B cell (primary cell): ENCODE measurements at regions of chr17 and their contacts with region 1.

Region 1: GRCh38 chr17:76397687-76398487 is 13.5 kb downstream of the SPHK1 start:
- DNase-seq: peak; percentile 85
- ATAC-seq: peak; percentile 95
- H3K4me3 ChIP-seq: no peak overlapping the region
- H3K4me3 Mint-ChIP-seq: no peak overlapping the region
- H3K27ac ChIP-seq: no peak overlapping the region
- H3K27ac Mint-ChIP-seq: no peak overlapping the region
- H3K4me1 ChIP-seq: no peaks in the 10 kb centered on the region
- H3K4me1 Mint-ChIP-seq: no peaks in the 10 kb centered on the region
- H3K27me3 ChIP-seq: no peaks in the 10 kb centered on the region
- H3K27me3 Mint-ChIP-seq: no peaks in the 10 kb centered on the region
- CTCF ChIP-seq: peak; percentile 97

Region 2: GRCh38 chr17:76147211-76148014 is 250.5 kb before region 1 on chr17:
- CTCF ChIA-PET with region 1: no interaction called
- POLR2A ChIA-PET with region 1: no interaction called
- intact Hi-C with region 1: no loop called
- DNase-seq: no peak
- ATAC-seq: no peak
- H3K4me3 ChIP-seq: no peak overlapping the region
- H3K4me3 Mint-ChIP-seq: no peak overlapping the region
- H3K27ac ChIP-seq: no peak overlapping the region
- H3K27ac Mint-ChIP-seq: peak overlapping the region; percentile 7
- H3K4me1 ChIP-seq: peaks cover 38 to 47% of the 10 kb centered on the region in 2 donors
- H3K4me1 Mint-ChIP-seq: peaks cover 49% of the 10 kb centered on the region
- H3K27me3 ChIP-seq: no peaks in the 10 kb centered on the region
- H3K27me3 Mint-ChIP-seq: no peaks in the 10 kb centered on the region
- CTCF ChIP-seq: peak; percentile 17

Region 3: DNA sequence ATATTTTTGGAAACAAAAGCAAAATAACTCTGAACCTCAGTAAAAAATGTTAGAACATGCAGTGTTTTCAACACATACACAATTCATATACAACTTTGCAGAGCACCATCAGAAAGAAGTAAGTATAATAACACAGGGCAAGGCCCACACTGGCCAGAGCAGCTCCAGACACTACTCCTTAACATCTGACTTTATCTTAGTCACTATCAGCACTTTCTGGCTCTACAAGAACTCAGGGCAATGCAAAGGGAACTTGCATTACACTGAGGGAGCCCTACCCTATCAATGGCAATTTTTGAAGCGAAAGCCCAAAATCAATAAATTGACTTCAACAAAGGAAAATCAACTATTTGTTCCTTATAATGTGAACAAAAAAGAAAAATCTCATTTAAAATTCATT is 174.1 kb before region 1 on chr17:
- CTCF ChIA-PET with region 1: no interaction called
- POLR2A ChIA-PET with region 1: no interaction called
- intact Hi-C with region 1: no loop called
- DNase-seq: no peak
- ATAC-seq: no peak
- H3K4me3 ChIP-seq: no peak overlapping the region
- H3K4me3 Mint-ChIP-seq: no peak overlapping the region
- H3K27ac ChIP-seq: no peak overlapping the region
- H3K27ac Mint-ChIP-seq: no peak overlapping the region
- H3K4me1 ChIP-seq: no peaks in the 10 kb centered on the region
- H3K4me1 Mint-ChIP-seq: no peaks in the 10 kb centered on the region
- H3K27me3 ChIP-seq: no peaks in the 10 kb centered on the region
- H3K27me3 Mint-ChIP-seq: peaks cover under 1% of the 10 kb centered on the region
- CTCF ChIP-seq: no peak

Region 4: DNA sequence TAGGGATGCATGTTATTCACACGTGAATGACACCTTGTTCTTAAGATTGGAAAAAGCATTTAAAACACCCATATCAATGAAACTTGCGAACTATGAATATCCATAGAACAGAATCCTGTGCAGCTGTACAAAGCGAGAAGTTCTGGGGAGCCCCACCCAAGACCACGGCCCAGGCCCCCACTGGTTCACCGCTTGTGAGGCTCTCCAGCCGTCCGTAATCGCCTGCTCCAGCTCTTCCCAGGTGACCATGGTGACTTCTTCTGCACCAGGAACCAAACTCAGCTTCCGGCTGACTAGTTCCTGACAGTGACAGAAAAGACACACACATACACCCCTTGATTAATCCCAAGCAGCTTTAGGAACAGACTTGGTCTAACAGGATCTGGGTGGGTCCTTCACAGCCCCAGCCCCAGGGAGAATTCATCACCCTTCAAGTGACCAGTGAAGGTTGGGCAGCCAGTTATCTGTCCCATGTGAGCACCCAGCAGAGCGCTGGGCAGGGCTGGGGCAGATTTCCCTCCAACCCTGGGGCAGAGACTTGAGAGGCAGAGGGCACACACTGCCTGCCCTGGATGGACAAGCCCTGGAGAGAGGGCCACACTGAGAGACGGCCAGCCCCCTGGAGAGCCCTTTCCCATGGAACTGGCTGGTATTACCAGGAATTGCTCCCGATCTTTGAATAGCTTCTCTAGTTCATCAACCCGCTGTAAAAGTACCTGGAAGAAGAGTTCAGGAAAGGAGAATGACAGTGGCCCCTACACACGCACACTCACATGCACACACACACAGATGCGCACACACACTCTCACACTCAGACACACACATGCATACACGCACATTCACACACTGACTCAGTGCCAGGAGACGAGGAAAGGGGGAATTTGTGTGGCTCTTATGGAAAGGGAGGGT is 93.4 kb before region 1 on chr17:
- CTCF ChIA-PET with region 1: interaction called, 119 read pairs
- POLR2A ChIA-PET with region 1: no interaction called
- intact Hi-C with region 1: no loop called
- DNase-seq: no peak
- ATAC-seq: no peak
- H3K4me3 ChIP-seq: no peak overlapping the region
- H3K4me3 Mint-ChIP-seq: no peak overlapping the region
- H3K27ac ChIP-seq: no peak overlapping the region
- H3K27ac Mint-ChIP-seq: no peak overlapping the region
- H3K4me1 ChIP-seq: no peaks in the 10 kb centered on the region
- H3K4me1 Mint-ChIP-seq: peaks cover 3% of the 10 kb centered on the region
- H3K27me3 ChIP-seq: no peaks in the 10 kb centered on the region
- H3K27me3 Mint-ChIP-seq: peaks cover 3% of the 10 kb centered on the region
- CTCF ChIP-seq: no peak

Region 5: DNA sequence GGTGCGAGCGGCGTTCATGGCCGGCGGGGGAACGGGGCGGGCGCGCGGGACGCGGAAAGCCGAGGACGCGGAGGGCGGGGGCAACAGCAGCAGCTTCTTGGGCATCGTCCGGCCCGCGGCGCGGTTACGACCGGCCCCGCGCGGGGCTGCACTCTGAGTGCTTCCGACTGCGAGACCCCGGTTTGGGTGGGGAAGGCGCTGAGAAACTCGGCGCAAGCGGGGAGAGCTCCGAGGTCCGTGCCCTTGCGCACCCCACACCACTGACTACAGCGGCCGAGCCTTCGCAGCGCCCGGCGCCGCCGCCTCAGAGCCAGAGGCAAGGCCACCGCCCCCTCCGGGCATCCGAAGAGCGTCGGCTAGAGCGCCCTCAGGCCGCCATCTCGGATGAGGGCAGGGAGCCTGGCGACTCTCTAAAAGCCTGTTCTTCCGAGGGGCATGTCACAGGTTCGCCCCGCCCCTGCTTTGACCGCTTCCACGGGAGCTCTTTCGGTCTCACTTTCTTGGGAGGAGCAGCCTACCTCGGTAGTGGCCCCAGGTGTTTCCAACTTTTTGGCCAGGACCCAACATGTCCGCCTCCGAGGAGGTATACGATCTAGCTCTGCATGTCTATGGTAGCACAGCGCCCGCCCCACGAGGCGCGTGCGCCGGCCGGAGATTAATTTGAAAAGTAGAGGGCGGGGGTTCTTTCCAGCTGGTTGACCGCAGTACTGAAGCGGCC is 44.1 kb before region 1 on chr17 and contains the start of gene PRPSAP1:
- CTCF ChIA-PET with region 1: interaction called, 15 read pairs
- POLR2A ChIA-PET with region 1: interaction called, 6 read pairs
- intact Hi-C with region 1: no loop called
- DNase-seq: peak; percentile 96
- ATAC-seq: peak; percentile 93
- H3K4me3 ChIP-seq: peak within 1 kb of the TSS; percentile 53 to 88 (median 68)
- H3K4me3 Mint-ChIP-seq: peak within 1 kb of the TSS; percentile 99
- H3K27ac ChIP-seq: peak within 1 kb of the TSS; percentile 84 to 94
- H3K27ac Mint-ChIP-seq: peak within 1 kb of the TSS; percentile 99
- H3K4me1 ChIP-seq: peaks cover 7 to 16% of the 10 kb centered on the region in 2 donors
- H3K4me1 Mint-ChIP-seq: peaks cover 27% of the 10 kb centered on the region
- H3K27me3 ChIP-seq: no peaks in the 10 kb centered on the region
- H3K27me3 Mint-ChIP-seq: no peaks in the 10 kb centered on the region
- CTCF ChIP-seq: peak; percentile 19
- total RNA-seq, gene PRPSAP1: 45.5 and 48.0 TPM in 2 replicates

Region 6: DNA sequence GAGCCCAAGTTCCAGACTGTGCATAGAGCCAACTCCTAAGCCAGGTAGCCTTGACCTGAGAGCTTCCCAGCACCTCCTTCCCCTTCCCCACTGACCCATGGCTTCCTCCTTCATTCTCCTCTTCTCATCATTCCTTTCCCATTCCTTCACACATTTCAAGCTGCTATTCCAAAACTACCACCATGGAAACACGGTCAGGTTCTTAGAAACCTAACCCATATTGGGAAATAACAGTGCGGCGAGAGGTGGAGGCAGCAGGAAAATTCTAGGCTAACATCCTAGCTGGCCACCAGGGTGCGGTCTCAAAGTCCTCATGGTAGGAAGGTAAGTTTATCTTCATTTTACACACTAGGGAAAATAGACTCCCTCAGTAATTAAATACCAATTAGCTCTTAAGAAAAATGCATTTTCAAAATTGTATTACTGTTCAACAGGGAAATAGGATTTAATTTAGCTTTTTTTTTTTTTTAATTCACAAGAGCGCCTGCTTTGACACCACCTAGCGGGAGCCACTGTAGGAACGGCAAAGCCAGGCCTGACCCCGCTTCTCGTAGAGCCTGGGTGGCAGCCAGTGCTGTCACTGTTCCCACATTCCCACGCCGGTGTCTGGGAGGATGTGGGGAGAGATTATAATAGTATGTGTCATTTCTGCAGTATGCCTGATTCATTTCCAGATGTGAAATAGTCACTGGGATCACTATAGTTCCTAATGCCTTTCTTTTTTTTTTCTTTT is 27.5 kb before region 1 on chr17:
- CTCF ChIA-PET with region 1: interaction called, 20 read pairs
- POLR2A ChIA-PET with region 1: no interaction called
- intact Hi-C with region 1: no loop called
- DNase-seq: no peak
- ATAC-seq: no peak
- H3K4me3 ChIP-seq: no peak overlapping the region
- H3K4me3 Mint-ChIP-seq: no peak overlapping the region
- H3K27ac ChIP-seq: no peak overlapping the region
- H3K27ac Mint-ChIP-seq: no peak overlapping the region
- H3K4me1 ChIP-seq: no peaks in the 10 kb centered on the region
- H3K4me1 Mint-ChIP-seq: no peaks in the 10 kb centered on the region
- H3K27me3 ChIP-seq: peaks cover 0 to 2% (median 0%) of the 10 kb centered on the region in 4 experiments
- H3K27me3 Mint-ChIP-seq: peaks cover 12% of the 10 kb centered on the region
- CTCF ChIP-seq: no peak

Region 7: DNA sequence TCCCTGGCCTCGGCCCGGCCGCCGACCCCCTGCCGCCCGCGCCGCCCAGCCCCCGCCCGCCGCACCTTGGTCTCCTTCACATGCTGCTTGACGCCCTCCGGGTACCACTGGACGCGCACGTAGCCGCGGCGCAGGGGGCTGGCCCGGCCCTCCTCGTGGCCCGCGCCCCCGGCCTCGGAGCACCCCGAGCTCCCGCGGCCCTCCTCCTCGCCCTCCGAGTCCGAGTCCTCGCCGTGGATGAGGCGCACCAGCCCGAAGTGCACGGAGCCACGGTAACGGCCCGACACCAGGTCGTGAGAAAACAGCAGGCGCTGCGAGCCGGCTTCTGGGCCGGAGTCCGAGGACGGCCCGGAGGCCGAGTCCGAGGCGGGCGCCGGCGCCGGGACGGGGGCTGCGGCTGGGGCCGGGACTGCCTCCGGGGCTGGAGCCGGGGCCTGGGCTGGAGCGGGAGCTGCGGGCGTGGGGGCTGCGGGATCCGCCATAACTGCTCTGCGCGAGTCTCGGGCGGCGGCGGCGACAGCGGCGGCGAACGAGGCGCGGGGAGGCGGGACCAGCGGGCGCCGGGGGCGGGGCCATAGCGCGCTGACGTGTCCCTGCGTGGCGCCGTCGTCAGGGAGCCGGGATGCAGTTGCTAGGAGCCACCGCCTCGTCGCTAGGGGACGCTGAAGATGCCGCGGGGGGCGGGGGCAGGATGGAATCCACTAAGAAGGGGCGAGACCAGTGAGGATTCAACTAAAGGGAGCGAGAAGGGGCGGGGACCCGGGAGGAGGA is 55.0 kb after region 1 on chr17 and contains the start of gene UBE2O:
- CTCF ChIA-PET with region 1: interaction called, 265 read pairs
- POLR2A ChIA-PET with region 1: no interaction called
- intact Hi-C with region 1: no loop called
- DNase-seq: peak; percentile 95
- ATAC-seq: peak; percentile 93
- H3K4me3 ChIP-seq: peak within 1 kb of the TSS; percentile 46 to 91 (median 72)
- H3K4me3 Mint-ChIP-seq: peak within 1 kb of the TSS; percentile 88
- H3K27ac ChIP-seq: peak within 1 kb of the TSS; percentile 46 to 77
- H3K27ac Mint-ChIP-seq: peak within 1 kb of the TSS; percentile 88
- H3K4me1 ChIP-seq: peaks cover 22 to 26% of the 10 kb centered on the region in 2 donors
- H3K4me1 Mint-ChIP-seq: peaks cover 37% of the 10 kb centered on the region
- H3K27me3 ChIP-seq: no peaks in the 10 kb centered on the region
- H3K27me3 Mint-ChIP-seq: no peaks in the 10 kb centered on the region
- CTCF ChIP-seq: peak; percentile 62
- total RNA-seq, gene UBE2O: 54.0 and 62.4 TPM in 2 replicates

Region 8: DNA sequence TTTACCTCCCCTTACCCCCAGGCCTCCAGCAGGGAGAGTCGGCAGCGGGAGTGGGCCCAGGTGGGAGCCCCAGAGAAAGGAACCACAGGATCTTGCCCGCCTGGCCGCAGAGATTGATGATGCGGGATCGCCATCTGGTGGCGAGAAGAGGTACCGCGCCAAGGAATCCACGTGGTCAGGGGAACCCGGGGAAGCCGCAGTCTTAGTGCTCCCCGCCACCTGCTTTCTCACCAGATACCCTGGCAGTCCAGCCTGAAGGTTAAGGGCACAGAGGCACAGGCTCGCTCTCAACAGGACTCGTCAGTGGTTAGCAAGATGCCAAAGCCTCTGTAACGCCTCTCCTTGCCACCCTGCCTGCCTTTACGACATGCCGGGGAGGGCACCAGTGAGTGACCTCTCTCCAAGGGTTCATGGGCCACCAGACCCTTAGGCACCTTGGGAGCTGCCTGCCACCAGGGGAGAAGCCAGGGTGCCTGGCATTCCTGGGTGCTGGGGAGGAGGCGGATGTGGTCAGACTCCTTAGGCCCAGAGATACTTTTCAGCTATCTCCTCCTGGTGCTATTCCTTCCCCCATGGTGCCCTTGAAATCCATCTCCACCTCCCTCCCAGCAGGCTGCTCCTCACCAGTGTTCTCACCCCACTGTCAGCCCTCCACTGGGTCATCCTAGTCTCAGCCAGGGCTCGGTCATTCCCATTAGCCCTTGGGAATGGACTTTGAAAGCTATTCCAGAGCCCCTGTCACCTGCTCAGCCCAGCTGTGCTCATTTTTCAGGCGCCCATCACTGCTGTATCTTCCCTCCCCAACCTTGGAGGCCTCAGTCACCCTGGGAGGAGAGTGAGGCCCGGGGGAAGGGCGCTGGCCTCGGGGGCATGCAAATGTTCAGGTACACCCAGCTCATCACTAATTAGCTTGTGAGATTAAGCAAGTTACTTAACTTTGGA is 108.8 kb after region 1 on chr17:
- CTCF ChIA-PET with region 1: interaction called, 23 read pairs
- POLR2A ChIA-PET with region 1: no interaction called
- intact Hi-C with region 1: no loop called
- DNase-seq: peak; percentile 92
- ATAC-seq: peak; percentile 73
- H3K4me3 ChIP-seq: no peak overlapping the region
- H3K4me3 Mint-ChIP-seq: no peak overlapping the region
- H3K27ac ChIP-seq: no peak overlapping the region
- H3K27ac Mint-ChIP-seq: peak overlapping the region; percentile 50
- H3K4me1 ChIP-seq: peaks cover 14 to 28% of the 10 kb centered on the region in 2 donors
- H3K4me1 Mint-ChIP-seq: peaks cover 28% of the 10 kb centered on the region
- H3K27me3 ChIP-seq: no peaks in the 10 kb centered on the region
- H3K27me3 Mint-ChIP-seq: peaks cover 2% of the 10 kb centered on the region
- CTCF ChIP-seq: peak; percentile 87